Ovary (tissue), 10 donors: ENCODE measurements at regions of chr21 and their contacts with region 1.

Region 1: DNA sequence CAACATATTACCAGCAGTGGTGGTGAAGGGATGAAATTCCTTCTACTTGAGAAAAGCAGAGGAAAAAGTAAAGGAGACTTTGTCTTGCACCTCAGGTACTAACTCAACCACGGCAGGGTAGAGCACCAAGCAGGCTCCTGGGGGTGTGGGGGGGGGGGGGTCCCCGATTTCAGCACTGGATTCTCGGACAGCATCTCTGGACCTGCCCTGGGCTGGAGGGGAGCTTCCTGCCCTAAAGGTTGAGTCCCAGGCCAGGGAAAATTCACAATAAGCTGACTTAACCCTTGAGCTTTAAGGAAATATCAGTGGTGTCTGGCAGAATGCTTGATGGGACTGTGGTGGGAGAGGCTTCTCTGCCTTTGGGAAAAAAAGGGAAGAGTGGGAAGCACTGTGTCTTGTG is 233.2 kb upstream of the CXADR start:
- DNase-seq: no peak
- H3K4me3 ChIP-seq: no peak overlapping the region
- H3K27ac ChIP-seq: no peak overlapping the region
- H3K4me1 ChIP-seq: no peaks in the 10 kb centered on the region
- H3K27me3 ChIP-seq: no peaks in the 10 kb centered on the region
- CTCF ChIP-seq: no peak
- EP300 ChIP-seq: no peak
- POLR2A ChIP-seq: no peak

Region 2: GRCh38 chr21:15908187-15908586 is 1371.5 kb before region 1 on chr21:
- intact Hi-C with region 1: loop called in 1 of 4 experiments (anchors 10 kb)
- DNase-seq: no peak
- H3K4me3 ChIP-seq: no peak overlapping the region
- H3K27ac ChIP-seq: no peak overlapping the region
- H3K4me1 ChIP-seq: no peaks in the 10 kb centered on the region
- H3K27me3 ChIP-seq: no peaks in the 10 kb centered on the region
- CTCF ChIP-seq: no peak
- EP300 ChIP-seq: no peak
- POLR2A ChIP-seq: no peak

Region 3: GRCh38 chr21:17527240-17527639 is 247.6 kb after region 1 on chr21:
- intact Hi-C with region 1: no loop called
- DNase-seq: no peak
- H3K4me3 ChIP-seq: no peak overlapping the region
- H3K27ac ChIP-seq: no peak overlapping the region
- H3K4me1 ChIP-seq: no peaks in the 10 kb centered on the region
- H3K27me3 ChIP-seq: no peaks in the 10 kb centered on the region
- CTCF ChIP-seq: no peak
- EP300 ChIP-seq: no peak
- POLR2A ChIP-seq: no peak